GM12878 (cell line): ENCODE measurements at regions of chr11 and their contacts with region 1.

Region 1: GRCh38 chr11:65429724-65430405 is 7.3 kb downstream of the NEAT1 start:
- DNase-seq: no peak
- ATAC-seq: peak; percentile 7
- H3K4me3 ChIP-seq: peak overlapping the region; percentile 95
- H3K27ac ChIP-seq: peak overlapping the region; percentile 100
- H3K4me1 ChIP-seq: peaks cover 42% of the 10 kb centered on the region
- H3K27me3 ChIP-seq: no peaks in the 10 kb centered on the region
- CTCF ChIP-seq: no peak
- EP300 ChIP-seq: no peak
- POLR2A ChIP-seq: peak; percentile 80
- RAD21 ChIP-seq: no peak

Region 2: GRCh38 chr11:65366340-65366773 is 63.5 kb before region 1 on chr11:
- CTCF ChIA-PET with region 1: interaction called, 4 read pairs
- POLR2A ChIA-PET with region 1: no interaction called
- RAD21 ChIA-PET with region 1: interaction called, 5 read pairs
- SMC1A ChIA-PET with region 1: interaction called, 3 read pairs
- in situ Hi-C with region 1: no loop called
- intact Hi-C with region 1: loop called (anchors 1 kb)
- DNase-seq: no peak
- ATAC-seq: peak; percentile 42
- H3K4me3 ChIP-seq: no peak overlapping the region
- H3K27ac ChIP-seq: no peak overlapping the region
- H3K4me1 ChIP-seq: peaks cover 16% of the 10 kb centered on the region
- H3K27me3 ChIP-seq: no peaks in the 10 kb centered on the region; a peak in 1 of 4 replicates
- CTCF ChIP-seq: peak; percentile 74 to 79 (median 76)
- EP300 ChIP-seq: no peak
- POLR2A ChIP-seq: no peak
- RAD21 ChIP-seq: peak; percentile 94

Region 3: DNA sequence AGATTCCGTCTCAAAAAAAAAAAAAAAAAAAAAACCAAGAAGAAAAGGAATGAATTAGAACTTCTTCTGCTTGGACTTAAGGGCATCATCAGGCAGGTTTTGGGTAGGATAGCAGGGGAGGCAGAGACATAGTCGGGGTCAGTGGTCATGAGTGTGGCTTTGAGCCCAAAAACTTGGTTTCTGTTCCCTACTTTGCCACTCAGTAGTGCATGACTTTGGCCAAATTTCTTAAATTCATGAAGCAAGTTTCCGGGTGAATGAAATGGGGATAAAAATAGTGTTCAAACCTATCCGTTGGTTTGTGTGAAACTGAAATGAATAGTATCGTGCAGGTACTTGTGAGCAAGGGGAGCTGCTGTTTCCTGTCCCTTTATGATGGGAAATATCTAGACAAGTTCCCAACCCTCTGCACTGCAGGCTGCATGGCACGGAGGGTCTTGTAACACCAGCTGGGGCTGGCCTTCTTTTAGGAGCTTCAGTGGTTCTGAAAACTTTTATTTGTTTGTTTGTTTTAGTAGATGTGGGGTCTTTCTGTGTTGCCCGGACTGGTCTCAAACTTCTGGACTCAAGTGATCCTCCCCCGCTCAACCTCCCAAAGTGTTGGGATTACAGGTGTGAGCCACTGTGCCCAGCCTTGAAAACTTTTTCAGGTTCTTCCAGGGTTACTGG is 11.1 kb after region 1 on chr11:
- CTCF ChIA-PET with region 1: interaction called, 4 read pairs
- POLR2A ChIA-PET with region 1: interaction called, 6 read pairs
- RAD21 ChIA-PET with region 1: interaction called, 13 read pairs
- SMC1A ChIA-PET with region 1: interaction called, 8 read pairs
- in situ Hi-C with region 1: no loop called
- intact Hi-C with region 1: loop called (anchors 1 kb)
- DNase-seq: peak; percentile 98
- ATAC-seq: peak; percentile 69
- H3K4me3 ChIP-seq: no peak overlapping the region
- H3K27ac ChIP-seq: peak overlapping the region; percentile 89
- H3K4me1 ChIP-seq: peaks cover 52% of the 10 kb centered on the region
- H3K27me3 ChIP-seq: no peaks in the 10 kb centered on the region
- CTCF ChIP-seq: no peak
- EP300 ChIP-seq: peak; percentile 81 to 84; a peak in 3 of 4 replicates
- POLR2A ChIP-seq: peak; percentile 47; the same call in 1 of the 2 replicates
- RAD21 ChIP-seq: no peak

Region 4: GRCh38 chr11:65569973-65570918 is 140.4 kb after region 1 on chr11 and contains the start of gene ZNRD2:
- CTCF ChIA-PET with region 1: no interaction called
- POLR2A ChIA-PET with region 1: no interaction called
- RAD21 ChIA-PET with region 1: no interaction called
- SMC1A ChIA-PET with region 1: no interaction called
- in situ Hi-C with region 1: no loop called
- intact Hi-C with region 1: no loop called
- DNase-seq: peak; percentile 97
- ATAC-seq: peak; percentile 77
- H3K4me3 ChIP-seq: peak within 1 kb of the TSS; percentile 84
- H3K27ac ChIP-seq: peak within 1 kb of the TSS; percentile 76
- H3K4me1 ChIP-seq: peaks cover 33% of the 10 kb centered on the region
- H3K27me3 ChIP-seq: no peaks in the 10 kb centered on the region
- CTCF ChIP-seq: peak; percentile 69 to 79 (median 69)
- EP300 ChIP-seq: peak in 1 of 2 experiments; percentile 22; a peak in 2 of 4 replicates
- POLR2A ChIP-seq: peak; percentile 78
- RAD21 ChIP-seq: peak; percentile 55
- polyA plus RNA-seq, gene ZNRD2: 14.8 to 48.7 TPM